CD14-positive monocyte (primary cell): ENCODE measurements at regions of chr6 and their contacts with region 1.

Region 1: DNA sequence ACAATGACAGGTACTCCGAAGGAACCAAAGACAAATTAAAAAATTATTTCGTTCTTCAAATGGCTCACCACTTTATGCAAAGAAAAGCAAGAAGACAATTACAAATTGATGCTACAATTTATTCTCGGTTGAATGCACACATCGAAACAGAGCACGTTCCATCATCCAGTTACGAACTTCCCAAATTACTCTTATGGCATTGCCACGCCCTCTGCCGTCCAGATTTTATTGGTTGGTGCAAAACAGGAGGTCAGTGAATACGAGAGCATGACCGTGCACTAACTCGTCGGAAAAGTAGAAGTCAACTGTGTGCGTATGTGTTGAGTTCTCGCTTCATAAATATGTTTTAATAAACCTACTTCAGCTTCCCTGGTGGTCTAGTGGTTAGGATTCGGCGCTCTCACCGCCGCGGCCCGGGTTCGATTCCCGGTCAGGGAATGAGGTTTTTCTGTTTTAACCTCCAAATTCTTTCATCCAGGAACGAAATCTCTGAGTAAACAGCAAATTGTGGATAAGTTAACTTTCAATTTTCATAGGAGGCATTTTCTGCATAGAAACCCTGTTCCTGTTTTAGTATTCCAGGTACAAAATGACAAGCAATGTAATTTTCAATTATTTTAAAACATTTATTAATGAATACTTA is 23.2 kb downstream of the ZNF311 start:
- DNase-seq: peak; percentile 97 to 98 (median 97)
- H3K4me3 ChIP-seq: peak overlapping the region; percentile 31 to 76 (median 68)
- H3K4me3 Mint-ChIP-seq: peak overlapping the region; percentile 76 to 77
- H3K27ac ChIP-seq: peak overlapping the region in 1 of 2 donors; percentile 30
- H3K27ac Mint-ChIP-seq: peak overlapping the region; percentile 46 to 89 (median 86)
- H3K4me1 ChIP-seq: peaks cover 47 to 54% of the 10 kb centered on the region in 2 donors
- H3K4me1 Mint-ChIP-seq: peaks cover 60% of the 10 kb centered on the region
- H3K27me3 ChIP-seq: no peaks in the 10 kb centered on the region
- H3K27me3 Mint-ChIP-seq: peaks cover 9 to 16% (median 10%) of the 10 kb centered on the region in 3 donors
- CTCF ChIP-seq: no peak

Region 2: DNA sequence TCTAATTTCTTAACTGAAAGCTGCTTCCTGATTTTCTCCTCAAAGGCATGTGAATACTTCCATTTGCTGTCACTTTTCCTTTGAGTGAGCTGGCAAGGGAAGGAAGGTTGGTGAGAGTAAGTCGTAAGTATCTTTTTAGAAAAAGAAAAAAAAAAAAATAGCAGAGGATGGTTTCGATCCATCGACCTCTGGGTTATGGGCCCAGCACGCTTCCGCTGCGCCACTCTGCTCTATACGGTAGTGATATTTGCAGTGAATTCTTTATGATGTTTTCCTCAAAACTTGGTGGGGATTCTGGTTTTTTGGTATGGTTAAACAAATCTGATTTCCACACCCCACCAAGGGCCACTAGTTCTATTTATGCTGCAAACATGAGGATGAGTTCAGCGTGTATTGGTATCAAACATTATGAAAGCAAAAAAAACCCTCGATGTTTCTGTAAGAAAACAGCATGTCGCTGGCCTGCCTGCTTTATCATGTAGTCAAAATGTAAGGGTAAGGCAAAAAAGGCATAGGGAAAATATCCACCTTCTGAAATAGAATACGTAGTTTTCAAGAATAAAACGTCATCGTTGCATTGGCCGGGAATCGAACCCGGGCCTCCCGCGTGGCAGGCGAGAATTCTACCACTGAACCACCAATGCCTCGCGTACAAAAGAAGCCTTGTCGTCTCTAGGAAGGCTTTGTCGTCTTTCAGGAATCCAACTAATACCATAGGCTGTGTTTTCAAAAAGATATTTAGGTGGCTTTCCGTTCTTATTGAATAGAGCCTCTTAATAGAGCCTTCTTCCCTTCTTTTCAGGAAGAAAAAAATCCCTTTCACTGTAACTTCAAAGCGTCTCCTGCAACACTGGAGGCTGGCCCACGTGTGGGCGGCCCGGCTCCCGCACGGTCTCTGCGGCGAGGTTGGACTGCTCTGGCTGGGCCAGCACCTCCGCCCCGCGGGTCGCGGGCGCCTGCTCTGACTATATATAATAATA is 1079.3 kb before region 1 on chr6:
- intact Hi-C with region 1: loop called in 1 of 2 experiments (anchors 10 kb)
- DNase-seq: peak; percentile 82 to 92 (median 85)
- H3K4me3 ChIP-seq: peak overlapping the region; percentile 48 to 97 (median 79)
- H3K4me3 Mint-ChIP-seq: peak overlapping the region; percentile 89 to 91
- H3K27ac ChIP-seq: peak overlapping the region; percentile 34 to 69
- H3K27ac Mint-ChIP-seq: peak overlapping the region; percentile 58 to 95 (median 87)
- H3K4me1 ChIP-seq: peaks cover 7 to 8% of the 10 kb centered on the region in 2 donors
- H3K4me1 Mint-ChIP-seq: peaks cover 7% of the 10 kb centered on the region
- H3K27me3 ChIP-seq: no peaks in the 10 kb centered on the region
- H3K27me3 Mint-ChIP-seq: peaks cover 2 to 4% (median 2%) of the 10 kb centered on the region in 3 donors
- CTCF ChIP-seq: no peak

Region 3: DNA sequence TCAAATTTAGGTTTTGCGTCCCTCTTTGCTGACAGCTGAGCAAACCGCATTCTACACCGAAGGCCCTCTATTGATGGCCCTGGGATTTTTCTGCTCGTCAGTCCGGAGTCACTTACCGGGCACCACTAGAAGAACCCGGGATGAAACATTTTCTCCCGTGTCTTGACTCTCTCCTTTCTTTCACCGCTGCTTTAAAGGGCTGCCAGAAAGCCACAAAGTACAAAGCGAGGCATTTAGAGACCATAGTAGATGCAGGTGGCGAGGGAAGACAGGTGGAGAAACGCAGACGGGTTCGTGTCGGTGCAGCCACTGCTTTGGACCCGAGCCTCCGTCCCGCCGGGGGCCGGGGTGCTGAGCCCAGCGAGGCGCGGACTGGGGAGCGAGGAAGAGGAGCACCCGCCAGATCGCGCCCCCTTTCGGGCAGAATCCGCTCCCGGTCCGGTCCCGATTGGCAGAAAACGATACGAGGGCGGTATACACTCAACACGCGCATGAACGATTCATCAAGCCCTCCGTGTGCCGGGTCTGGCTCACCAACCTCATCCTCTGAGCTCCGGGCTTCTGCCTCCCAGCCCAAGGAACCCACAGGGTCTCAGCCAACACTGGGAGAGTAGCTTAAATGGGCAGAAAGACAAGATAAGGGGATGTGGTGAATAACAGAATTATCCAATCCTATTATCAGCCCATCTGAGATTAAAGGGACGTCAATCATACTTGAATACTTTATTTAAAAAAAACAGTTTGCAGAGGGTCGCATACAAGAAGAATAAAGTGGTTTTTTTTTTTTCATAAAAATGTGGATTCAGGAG is 143.1 kb before region 1 on chr6:
- intact Hi-C with region 1: loop called in 1 of 2 experiments (anchors 10 kb)
- DNase-seq: peak; percentile 42 to 68 (median 43)
- H3K4me3 ChIP-seq: peak overlapping the region; percentile 54 to 83 (median 83)
- H3K4me3 Mint-ChIP-seq: peak overlapping the region; percentile 85 to 88
- H3K27ac ChIP-seq: no peak overlapping the region
- H3K27ac Mint-ChIP-seq: no peak overlapping the region
- H3K4me1 ChIP-seq: peaks cover 25 to 29% of the 10 kb centered on the region in 2 donors
- H3K4me1 Mint-ChIP-seq: peaks cover 25% of the 10 kb centered on the region
- H3K27me3 ChIP-seq: peaks cover 25 to 69% of the 10 kb centered on the region in 2 donors
- H3K27me3 Mint-ChIP-seq: peaks cover 63 to 87% (median 69%) of the 10 kb centered on the region in 3 donors
- CTCF ChIP-seq: peak; percentile 63

Region 4: DNA sequence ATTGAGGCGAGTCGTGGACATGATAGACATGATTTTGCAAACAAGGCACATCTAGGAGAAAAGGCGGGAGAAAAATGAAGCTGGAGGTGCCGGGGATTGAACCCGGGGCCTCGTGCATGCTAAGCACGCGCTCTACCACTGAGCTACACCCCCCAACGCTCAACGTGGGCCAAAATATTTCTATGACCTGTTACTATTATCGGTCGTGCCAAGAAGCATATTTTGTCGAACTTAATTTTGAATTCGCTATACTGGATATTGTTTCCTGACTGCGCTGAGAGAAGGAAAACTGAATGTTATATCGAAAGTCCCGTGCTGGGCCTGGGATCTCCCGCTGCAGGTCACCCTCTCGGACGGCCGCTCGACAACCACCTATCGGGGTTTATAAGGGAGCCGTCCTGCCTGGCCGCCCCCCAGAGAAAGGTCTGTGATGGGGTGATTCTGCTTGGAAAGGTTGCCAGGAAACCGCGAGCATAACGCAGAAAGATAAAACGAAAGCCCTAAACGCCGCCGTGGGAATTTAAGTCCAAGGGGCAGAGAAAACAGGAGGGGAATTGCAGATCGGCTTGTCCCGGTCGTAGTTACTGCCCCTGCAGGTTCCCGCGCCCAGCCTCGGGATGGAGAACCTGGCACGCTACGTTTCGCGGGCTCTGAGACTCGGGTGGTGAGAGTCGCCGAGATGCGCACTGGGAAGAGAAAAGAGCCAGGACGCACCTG is 118.2 kb before region 1 on chr6:
- intact Hi-C with region 1: loop called in 1 of 2 experiments (anchors 10 kb)
- DNase-seq: peak; percentile 70 to 74 (median 72)
- H3K4me3 ChIP-seq: peak overlapping the region; percentile 35 to 88 (median 57)
- H3K4me3 Mint-ChIP-seq: peak overlapping the region; percentile 90 to 97
- H3K27ac ChIP-seq: no peak overlapping the region
- H3K27ac Mint-ChIP-seq: peak overlapping the region in 3 of 7 donors; percentile 18 to 68 (median 33)
- H3K4me1 ChIP-seq: peaks cover 21 to 27% of the 10 kb centered on the region in 2 donors
- H3K4me1 Mint-ChIP-seq: peaks cover 39% of the 10 kb centered on the region
- H3K27me3 ChIP-seq: peaks cover 7 to 35% of the 10 kb centered on the region in 2 donors
- H3K27me3 Mint-ChIP-seq: peaks cover 25 to 36% (median 29%) of the 10 kb centered on the region in 3 donors
- CTCF ChIP-seq: no peak

Region 5: GRCh38 chr6:28895134-28895812 is 86.7 kb before region 1 on chr6:
- intact Hi-C with region 1: loop called (anchors 2 to 10 kb)
- DNase-seq: peak; percentile 90 to 97 (median 93)
- H3K4me3 ChIP-seq: peak overlapping the region; percentile 49 to 90 (median 81)
- H3K4me3 Mint-ChIP-seq: peak overlapping the region; percentile 94 to 95
- H3K27ac ChIP-seq: peak overlapping the region; percentile 83 to 95
- H3K27ac Mint-ChIP-seq: peak overlapping the region; percentile 98 to 99 (median 99)
- H3K4me1 ChIP-seq: peaks cover 13 to 16% of the 10 kb centered on the region in 2 donors
- H3K4me1 Mint-ChIP-seq: peaks cover 15% of the 10 kb centered on the region
- H3K27me3 ChIP-seq: no peaks in the 10 kb centered on the region
- H3K27me3 Mint-ChIP-seq: peaks cover 3 to 6% (median 4%) of the 10 kb centered on the region in 3 donors
- CTCF ChIP-seq: no peak

Region 6: DNA sequence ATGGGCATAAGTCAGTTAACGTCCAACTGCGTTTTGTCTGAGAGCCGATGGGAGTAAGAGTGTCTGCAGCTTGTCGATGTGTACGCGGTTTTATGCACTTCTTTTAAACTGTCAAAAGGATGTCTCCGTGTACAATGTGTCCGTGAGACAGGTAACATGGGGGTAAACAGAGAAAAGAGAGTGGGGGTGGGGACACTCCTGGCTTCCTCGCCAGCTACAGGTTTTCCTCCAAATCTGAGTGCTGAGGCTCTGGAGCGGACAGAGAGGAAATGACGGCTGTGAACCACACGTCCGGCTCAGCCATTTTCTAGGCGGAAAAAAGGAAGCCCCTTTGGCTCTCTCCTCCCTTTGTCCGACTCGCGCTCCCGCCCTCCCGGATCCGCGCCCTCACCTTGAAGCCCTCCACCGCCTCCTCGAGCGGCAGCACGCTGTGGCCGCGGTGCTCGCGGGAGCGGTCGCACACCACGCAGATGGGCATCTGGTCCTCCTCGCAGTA is 59.1 kb before region 1 on chr6:
- intact Hi-C with region 1: no loop called
- DNase-seq: peak; percentile 46 to 75 (median 65)
- H3K4me3 ChIP-seq: peak overlapping the region; percentile 87 to 92 (median 88)
- H3K4me3 Mint-ChIP-seq: peak overlapping the region; percentile 93 to 98
- H3K27ac ChIP-seq: peak overlapping the region; percentile 89 to 92
- H3K27ac Mint-ChIP-seq: peak overlapping the region; percentile 94 to 98 (median 95)
- H3K4me1 ChIP-seq: peaks cover 53 to 59% of the 10 kb centered on the region in 2 donors
- H3K4me1 Mint-ChIP-seq: peaks cover 47% of the 10 kb centered on the region
- H3K27me3 ChIP-seq: no peaks in the 10 kb centered on the region
- H3K27me3 Mint-ChIP-seq: peaks cover 0 to 4% (median 0%) of the 10 kb centered on the region in 3 donors
- CTCF ChIP-seq: no peak

Region 7: DNA sequence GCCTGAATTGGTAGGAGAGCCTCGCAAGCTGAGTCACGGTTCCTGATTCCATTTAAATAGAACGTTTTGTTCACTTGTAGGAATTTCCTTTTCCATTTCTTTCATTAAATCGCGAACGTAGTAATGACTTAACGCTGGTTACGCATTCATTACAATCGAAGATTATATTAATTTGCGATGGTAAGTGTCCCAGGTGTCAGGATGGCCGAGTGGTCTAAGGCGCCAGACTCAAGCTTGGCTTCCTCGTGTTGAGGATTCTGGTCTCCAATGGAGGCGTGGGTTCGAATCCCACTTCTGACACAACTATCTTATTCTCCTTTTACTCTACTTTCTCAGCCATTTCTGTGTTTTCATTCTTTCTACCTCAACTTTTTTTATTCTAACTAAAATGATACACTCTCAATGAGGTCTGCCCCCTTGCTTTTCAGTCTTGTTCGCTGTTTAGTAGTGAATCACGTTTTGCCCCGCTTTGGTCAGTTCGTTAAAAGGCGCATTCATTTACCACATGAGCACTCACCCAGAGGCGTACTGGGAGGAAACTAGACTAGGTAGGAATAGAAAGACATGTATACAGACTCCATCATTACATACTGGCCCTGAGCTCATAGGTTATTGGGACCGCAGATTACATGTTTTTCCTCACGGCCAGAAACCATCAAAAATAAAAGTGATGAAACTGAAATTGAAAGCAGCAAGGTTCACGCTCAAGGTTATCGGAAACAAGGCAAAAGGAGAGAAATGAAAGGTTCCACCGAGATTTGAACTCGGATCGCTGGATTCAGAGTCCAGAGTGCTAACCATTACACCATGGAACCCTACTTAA is 40.9 kb before region 1 on chr6:
- intact Hi-C with region 1: loop called (anchors 2 to 5 kb)
- DNase-seq: peak; percentile 68 to 79 (median 77)
- H3K4me3 ChIP-seq: peak overlapping the region; percentile 48 to 92 (median 92)
- H3K4me3 Mint-ChIP-seq: peak overlapping the region; percentile 88 to 98
- H3K27ac ChIP-seq: peak overlapping the region; percentile 43 to 46
- H3K27ac Mint-ChIP-seq: peak overlapping the region; percentile 77 to 89 (median 86)
- H3K4me1 ChIP-seq: peaks cover 53 to 54% of the 10 kb centered on the region in 2 donors
- H3K4me1 Mint-ChIP-seq: peaks cover 60% of the 10 kb centered on the region
- H3K27me3 ChIP-seq: no peaks in the 10 kb centered on the region
- H3K27me3 Mint-ChIP-seq: peaks cover 0 to 1% (median 0%) of the 10 kb centered on the region in 3 donors
- CTCF ChIP-seq: no peak